HepG2 (cell line): ENCODE measurements at regions of chr17 and their contacts with region 1.

Region 1: GRCh38 chr17:60665602-60666001 is 12.0 kb upstream of the BCAS3 start:
- DNase-seq: no peak
- ATAC-seq: no peak
- H3K4me3 ChIP-seq: no peak overlapping the region
- H3K27ac ChIP-seq: no peak overlapping the region
- H3K4me1 ChIP-seq: no peaks in the 10 kb centered on the region
- H3K27me3 ChIP-seq: no peaks in the 10 kb centered on the region
- CTCF ChIP-seq: no peak
- EP300 ChIP-seq: no peak
- POLR2A ChIP-seq: no peak
- RAD21 ChIP-seq: no peak

Region 2: DNA sequence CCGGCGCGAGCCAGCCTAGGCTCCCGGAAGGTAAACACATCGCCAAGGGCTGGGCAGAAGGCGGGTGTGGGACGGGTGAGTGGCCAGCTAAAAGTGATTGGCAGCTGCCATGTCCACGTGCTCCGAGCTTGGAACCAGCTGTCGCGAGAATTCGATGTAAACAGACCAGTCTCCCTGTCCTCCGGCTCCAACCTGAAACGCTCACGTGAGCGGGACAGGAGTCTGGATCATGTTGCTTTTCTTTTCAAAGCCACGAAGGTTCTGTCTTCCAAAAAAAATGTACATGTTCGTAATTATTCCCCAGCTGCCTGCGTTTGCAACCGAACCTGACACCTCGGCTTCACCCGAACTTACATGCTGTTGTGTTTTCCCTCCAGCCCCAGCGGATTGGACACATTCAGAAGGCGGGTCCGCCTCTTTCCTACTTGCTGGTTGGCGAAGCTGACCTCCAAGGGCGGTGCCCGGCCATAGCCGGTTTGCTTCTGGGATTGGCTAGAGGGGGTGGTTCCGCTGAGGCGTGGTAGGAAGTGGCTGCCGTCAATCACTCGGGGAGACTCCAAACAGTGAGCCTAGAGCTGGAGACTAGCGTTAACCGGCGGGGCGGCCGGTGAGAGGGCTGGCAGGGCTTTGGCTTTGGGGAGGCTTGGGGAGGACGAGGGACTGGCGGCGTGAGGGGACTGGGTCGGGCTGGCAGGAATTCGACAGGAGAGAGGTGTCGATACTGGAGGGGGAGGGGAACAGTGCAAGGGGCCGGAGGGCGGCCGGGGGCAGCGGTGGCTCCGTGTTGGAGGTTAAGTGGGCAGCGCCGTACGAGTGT is 11.9 kb after region 1 on chr17 and contains the start of gene BCAS3:
- CTCF ChIA-PET with region 1: no interaction called
- POLR2A ChIA-PET with region 1: interaction called, 11 read pairs
- in situ Hi-C with region 1: no loop called
- intact Hi-C with region 1: no loop called
- DNase-seq: peak; percentile 100
- ATAC-seq: peak; percentile 98
- H3K4me3 ChIP-seq: peak within 1 kb of the TSS; percentile 68 to 77 (median 75)
- H3K27ac ChIP-seq: peak within 1 kb of the TSS; percentile 56
- H3K4me1 ChIP-seq: peaks cover 7% of the 10 kb centered on the region
- H3K27me3 ChIP-seq: no peaks in the 10 kb centered on the region; a peak in 1 of 5 replicates
- CTCF ChIP-seq: peak; percentile 21; the same call in 1 of the 2 replicates
- EP300 ChIP-seq: 0 out of 4 replicates have a peak, but pooled peaks of 1 of the 2 experiments have one; percentile 44
- POLR2A ChIP-seq: peak; percentile 87 to 94
- RAD21 ChIP-seq: no peak
- total RNA-seq, gene BCAS3: 10.7 and 15.8 TPM in 2 replicates

Region 3: GRCh38 chr17:60720763-60721531 is 55.3 kb after region 1 on chr17:
- CTCF ChIA-PET with region 1: no interaction called
- POLR2A ChIA-PET with region 1: no interaction called
- in situ Hi-C with region 1: no loop called
- intact Hi-C with region 1: no loop called
- DNase-seq: peak; percentile 64
- ATAC-seq: peak; percentile 70
- H3K4me3 ChIP-seq: no peak overlapping the region
- H3K27ac ChIP-seq: no peak overlapping the region
- H3K4me1 ChIP-seq: no peaks in the 10 kb centered on the region
- H3K27me3 ChIP-seq: no peaks in the 10 kb centered on the region
- CTCF ChIP-seq: peak; percentile 88
- EP300 ChIP-seq: no peak
- POLR2A ChIP-seq: no peak
- RAD21 ChIP-seq: peak; percentile 89